CD4-positive, alpha-beta T cell (primary cell): ENCODE measurements at regions of chr15 and their contacts with region 1.

Region 1: DNA sequence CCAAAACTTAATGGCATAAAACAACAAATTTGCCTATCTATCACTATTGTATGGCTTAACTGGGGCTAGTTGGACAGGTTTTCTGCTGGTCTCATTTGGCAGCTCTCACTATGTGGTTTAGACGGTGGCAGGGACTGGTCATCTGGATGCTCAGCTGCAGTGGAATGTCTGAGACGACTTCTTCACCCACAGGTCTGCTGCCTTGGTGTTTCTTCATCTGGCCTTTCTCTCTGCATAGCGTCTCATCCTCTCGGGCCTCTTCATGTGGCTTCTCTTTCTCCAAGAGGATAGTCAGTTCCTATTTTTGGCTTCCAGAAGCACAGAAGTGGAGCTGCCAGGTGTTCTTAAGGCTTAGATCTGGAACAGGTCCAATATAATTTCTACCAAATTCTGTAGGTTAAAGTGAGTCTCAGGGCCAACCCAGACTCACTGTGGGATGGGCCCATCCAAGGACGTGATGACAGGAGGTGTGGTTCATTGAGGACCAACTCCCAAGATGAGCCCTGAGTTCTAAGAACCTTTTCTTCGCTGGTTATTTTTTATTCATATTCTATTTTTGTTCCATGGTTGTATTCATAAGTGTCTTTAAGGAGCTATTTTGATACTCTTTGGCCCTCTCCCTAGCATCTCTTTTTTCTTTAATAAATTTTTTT is 18.6 kb downstream of the UBE2Q2 start:
- DNase-seq: no peak
- ATAC-seq: no peak
- H3K4me3 ChIP-seq: no peak overlapping the region
- H3K4me3 Mint-ChIP-seq: no peak overlapping the region
- H3K27ac ChIP-seq: no peak overlapping the region
- H3K27ac Mint-ChIP-seq: no peak overlapping the region
- H3K4me1 ChIP-seq: no peaks in the 10 kb centered on the region
- H3K4me1 Mint-ChIP-seq: peaks cover 72% of the 10 kb centered on the region
- H3K27me3 ChIP-seq: no peaks in the 10 kb centered on the region
- H3K27me3 Mint-ChIP-seq: no peaks in the 10 kb centered on the region
- CTCF ChIP-seq: no peak

Region 2: DNA sequence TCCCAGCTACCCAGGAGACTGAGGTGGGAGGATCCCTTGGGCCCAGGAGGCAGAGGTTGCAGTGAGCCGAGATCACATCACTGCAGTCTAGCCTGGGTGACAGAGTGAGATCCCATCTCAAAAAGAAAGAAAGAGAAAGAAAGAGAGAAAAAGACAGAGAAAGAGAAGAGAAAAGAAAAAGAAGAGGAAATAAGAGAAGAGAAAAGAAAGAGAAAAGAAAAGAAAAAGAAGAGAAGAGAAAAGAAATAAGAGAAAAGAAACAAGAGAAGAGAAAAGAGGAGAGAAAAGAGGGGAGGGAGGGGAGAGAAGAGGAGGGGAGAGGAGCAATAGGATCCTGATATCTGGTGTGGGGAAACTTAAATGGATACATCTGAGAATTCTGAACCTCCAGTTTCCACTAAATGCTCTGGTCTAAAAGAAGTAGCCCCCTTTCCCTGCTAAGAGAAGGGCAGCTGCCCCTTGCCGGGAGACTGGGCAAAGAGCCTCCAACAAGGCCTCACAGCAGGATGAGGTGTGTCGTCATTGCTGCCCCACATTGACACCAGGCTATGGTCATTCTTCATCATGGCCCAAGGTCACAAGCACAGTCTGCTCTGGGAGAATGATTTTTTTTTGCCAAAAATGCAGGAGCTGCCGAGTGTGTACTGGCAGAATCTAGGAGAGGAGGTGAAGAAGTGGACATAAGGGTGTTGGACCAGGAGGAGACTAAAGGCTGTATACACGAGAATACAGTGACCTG is 547.2 kb before region 1 on chr15:
- CTCF ChIA-PET with region 1: no interaction called
- POLR2A ChIA-PET with region 1: no interaction called
- intact Hi-C with region 1: no loop called
- DNase-seq: no peak
- ATAC-seq: no peak
- H3K4me3 ChIP-seq: no peak overlapping the region
- H3K4me3 Mint-ChIP-seq: no peak overlapping the region
- H3K27ac ChIP-seq: no peak overlapping the region
- H3K27ac Mint-ChIP-seq: no peak overlapping the region
- H3K4me1 ChIP-seq: no peaks in the 10 kb centered on the region
- H3K4me1 Mint-ChIP-seq: no peaks in the 10 kb centered on the region
- H3K27me3 ChIP-seq: peaks cover 0 to 1% of the 10 kb centered on the region in 2 experiments
- H3K27me3 Mint-ChIP-seq: no peaks in the 10 kb centered on the region
- CTCF ChIP-seq: peak; percentile 24

Region 3: DNA sequence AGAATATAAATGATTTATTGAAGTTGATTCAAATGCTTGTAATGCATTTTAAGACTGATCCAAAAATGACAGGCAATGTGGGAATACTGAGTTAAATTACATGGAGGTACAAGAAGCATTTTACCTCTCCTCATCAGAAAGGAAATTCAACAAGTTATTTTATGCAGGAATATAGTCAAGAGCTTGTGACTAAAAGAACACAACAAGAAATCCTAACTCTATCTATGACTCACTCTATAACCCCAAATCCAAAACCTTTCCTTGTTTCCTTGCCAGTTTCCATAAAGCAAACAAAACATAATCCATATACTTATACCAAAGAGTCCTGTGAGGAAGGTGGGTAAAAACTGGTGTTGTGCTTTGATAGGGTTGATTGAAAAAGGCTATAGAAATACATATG is 441.2 kb before region 1 on chr15:
- CTCF ChIA-PET with region 1: no interaction called
- POLR2A ChIA-PET with region 1: no interaction called
- intact Hi-C with region 1: no loop called
- DNase-seq: no peak
- ATAC-seq: no peak
- H3K4me3 ChIP-seq: no peak overlapping the region
- H3K4me3 Mint-ChIP-seq: no peak overlapping the region
- H3K27ac ChIP-seq: no peak overlapping the region
- H3K27ac Mint-ChIP-seq: no peak overlapping the region
- H3K4me1 ChIP-seq: no peaks in the 10 kb centered on the region
- H3K4me1 Mint-ChIP-seq: peaks cover 32% of the 10 kb centered on the region
- H3K27me3 ChIP-seq: no peaks in the 10 kb centered on the region
- H3K27me3 Mint-ChIP-seq: no peaks in the 10 kb centered on the region
- CTCF ChIP-seq: no peak

Region 4: DNA sequence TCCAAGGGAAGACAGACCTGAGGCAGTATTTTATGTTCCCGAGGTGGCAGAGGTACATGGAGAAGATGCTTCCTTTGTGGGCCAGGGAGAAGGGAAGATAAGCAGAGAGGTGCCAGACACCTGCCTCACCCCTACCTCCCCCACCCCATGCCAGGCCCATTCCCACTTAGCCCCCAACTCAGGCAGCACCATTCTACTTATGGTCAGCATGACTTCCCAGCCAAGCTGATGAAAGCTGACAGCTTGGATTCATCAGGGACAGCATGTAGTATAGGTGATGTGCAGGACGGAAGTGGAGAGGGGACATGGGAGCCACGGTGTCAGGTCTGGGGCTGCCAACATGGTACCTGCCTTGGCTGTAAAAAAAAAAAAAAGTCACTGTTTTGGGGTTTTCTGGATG is 91.7 kb before region 1 on chr15:
- CTCF ChIA-PET with region 1: no interaction called
- POLR2A ChIA-PET with region 1: no interaction called
- intact Hi-C with region 1: no loop called
- DNase-seq: no peak
- ATAC-seq: no peak
- H3K4me3 ChIP-seq: no peak overlapping the region
- H3K4me3 Mint-ChIP-seq: no peak overlapping the region
- H3K27ac ChIP-seq: no peak overlapping the region
- H3K27ac Mint-ChIP-seq: no peak overlapping the region
- H3K4me1 ChIP-seq: no peaks in the 10 kb centered on the region
- H3K4me1 Mint-ChIP-seq: no peaks in the 10 kb centered on the region
- H3K27me3 ChIP-seq: no peaks in the 10 kb centered on the region
- H3K27me3 Mint-ChIP-seq: no peaks in the 10 kb centered on the region
- CTCF ChIP-seq: no peak

Region 5: DNA sequence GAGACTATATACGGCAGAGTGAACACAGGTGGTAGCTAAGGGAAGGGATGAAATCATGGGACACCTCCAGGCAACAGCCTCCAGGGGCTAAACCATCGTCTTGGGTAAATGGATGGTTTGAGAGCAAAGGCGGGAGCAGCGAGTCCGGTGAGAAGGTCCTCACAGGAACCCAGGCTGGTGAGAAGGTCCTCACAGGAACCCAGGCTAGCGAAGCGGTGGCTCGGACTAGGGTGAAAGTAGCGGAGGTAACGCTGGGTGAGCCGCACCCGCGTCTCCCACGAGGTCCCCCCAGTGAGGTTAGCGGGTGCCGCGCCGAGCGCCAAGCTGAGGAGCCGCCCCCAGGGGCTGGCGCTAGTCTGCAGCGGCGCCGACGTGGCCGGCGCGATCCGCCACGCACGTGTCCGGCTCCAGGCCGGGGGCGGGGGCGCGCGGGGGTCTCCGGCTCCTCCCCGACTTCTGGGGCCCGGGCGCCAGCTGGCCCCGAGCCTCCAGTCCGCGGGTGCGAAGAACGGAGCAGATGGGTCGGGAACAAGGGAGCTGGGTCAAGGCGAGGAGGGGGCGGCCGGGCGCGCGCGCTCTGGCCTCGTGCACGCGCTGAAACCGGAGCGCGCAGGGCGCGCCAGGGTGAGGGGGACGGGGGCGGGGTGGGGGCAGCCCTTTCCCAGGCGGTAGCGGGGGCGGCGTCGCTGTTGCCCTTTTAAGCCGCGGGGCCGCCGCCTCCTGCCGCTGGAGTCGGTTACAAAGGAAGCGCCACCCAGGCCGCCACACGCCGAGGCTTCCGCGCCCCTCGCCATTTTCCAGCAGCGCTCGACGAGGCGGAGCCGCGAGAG is 18.9 kb before region 1 on chr15 and contains the start of gene UBE2Q2:
- CTCF ChIA-PET with region 1: interaction called, 3 read pairs
- POLR2A ChIA-PET with region 1: interaction called, 5 read pairs
- intact Hi-C with region 1: loop called in 1 of 2 experiments (anchors 2 kb)
- DNase-seq: peak; percentile 53 to 88 (median 68)
- ATAC-seq: peak; percentile 55
- H3K4me3 ChIP-seq: peak within 1 kb of the TSS; percentile 83
- H3K4me3 Mint-ChIP-seq: peak within 1 kb of the TSS; percentile 93
- H3K27ac ChIP-seq: peak within 1 kb of the TSS; percentile 57 to 60
- H3K27ac Mint-ChIP-seq: peak within 1 kb of the TSS; percentile 91
- H3K4me1 ChIP-seq: peaks cover 30% of the 10 kb centered on the region
- H3K4me1 Mint-ChIP-seq: peaks cover 44% of the 10 kb centered on the region
- H3K27me3 ChIP-seq: no peaks in the 10 kb centered on the region
- H3K27me3 Mint-ChIP-seq: no peaks in the 10 kb centered on the region
- CTCF ChIP-seq: no peak
- total RNA-seq, gene UBE2Q2: 29.3 to 33.5 TPM